ENCODE measurements at regions of chrX and their contacts with region 1.

Region 1: GRCh38 chrX:123960042-123960611 is 1.4 kb upstream of the STAG2 start:
- DNase-seq: peak; percentile 74
- ATAC-seq: peak; percentile 74
- H3K4me3 Mint-ChIP-seq: peak overlapping the region; percentile 93
- H3K27ac Mint-ChIP-seq: peak overlapping the region; percentile 99
- H3K4me1 Mint-ChIP-seq: peaks cover 23% of the 10 kb centered on the region
- H3K27me3 Mint-ChIP-seq: no peaks in the 10 kb centered on the region
- CTCF ChIP-seq: no peak

Region 2: GRCh38 chrX:123833387-123833786 is 126.7 kb before region 1 on chrX:
- CTCF ChIA-PET with region 1: interaction called, 7 read pairs
- POLR2A ChIA-PET with region 1: interaction called, 10 read pairs
- intact Hi-C with region 1: loop called (anchors 1 kb)
- DNase-seq: peak; percentile 16
- ATAC-seq: peak; percentile 63
- H3K4me3 Mint-ChIP-seq: no peak overlapping the region
- H3K27ac Mint-ChIP-seq: no peak overlapping the region
- H3K4me1 Mint-ChIP-seq: peaks cover 20% of the 10 kb centered on the region
- H3K27me3 Mint-ChIP-seq: no peaks in the 10 kb centered on the region
- CTCF ChIP-seq: no peak

Region 3: GRCh38 chrX:123878252-123878721 is 81.8 kb before region 1 on chrX:
- CTCF ChIA-PET with region 1: no interaction called
- POLR2A ChIA-PET with region 1: no interaction called
- intact Hi-C with region 1: loop called (anchors 5 kb)
- DNase-seq: no peak
- ATAC-seq: peak; percentile 73
- H3K4me3 Mint-ChIP-seq: peak overlapping the region; percentile 38
- H3K27ac Mint-ChIP-seq: peak overlapping the region; percentile 41
- H3K4me1 Mint-ChIP-seq: peaks cover 26% of the 10 kb centered on the region
- H3K27me3 Mint-ChIP-seq: no peaks in the 10 kb centered on the region
- CTCF ChIP-seq: no peak

Region 4: GRCh38 chrX:123909523-123909922 is 50.6 kb before region 1 on chrX:
- CTCF ChIA-PET with region 1: no interaction called
- POLR2A ChIA-PET with region 1: no interaction called
- intact Hi-C with region 1: no loop called
- DNase-seq: no peak
- ATAC-seq: no peak
- H3K4me3 Mint-ChIP-seq: no peak overlapping the region
- H3K27ac Mint-ChIP-seq: no peak overlapping the region
- H3K4me1 Mint-ChIP-seq: peaks cover 28% of the 10 kb centered on the region
- H3K27me3 Mint-ChIP-seq: no peaks in the 10 kb centered on the region
- CTCF ChIP-seq: no peak

Region 5: GRCh38 chrX:124018023-124018422 is 57.9 kb after region 1 on chrX:
- CTCF ChIA-PET with region 1: no interaction called
- POLR2A ChIA-PET with region 1: interaction called, 4 read pairs
- intact Hi-C with region 1: loop called (anchors 1 kb)
- DNase-seq: no peak
- ATAC-seq: no peak
- H3K4me3 Mint-ChIP-seq: no peak overlapping the region
- H3K27ac Mint-ChIP-seq: no peak overlapping the region
- H3K4me1 Mint-ChIP-seq: peaks cover 32% of the 10 kb centered on the region
- H3K27me3 Mint-ChIP-seq: no peaks in the 10 kb centered on the region
- CTCF ChIP-seq: no peak

Region 6: GRCh38 chrX:124211312-124211942 is 251.3 kb after region 1 on chrX:
- CTCF ChIA-PET with region 1: no interaction called
- POLR2A ChIA-PET with region 1: no interaction called
- intact Hi-C with region 1: loop called (anchors 10 kb)
- DNase-seq: no peak
- ATAC-seq: no peak
- H3K4me3 Mint-ChIP-seq: no peak overlapping the region
- H3K27ac Mint-ChIP-seq: no peak overlapping the region
- H3K4me1 Mint-ChIP-seq: peaks cover 15% of the 10 kb centered on the region
- H3K27me3 Mint-ChIP-seq: peaks cover 1% of the 10 kb centered on the region
- CTCF ChIP-seq: no peak

Region 7: GRCh38 chrX:124362072-124362471 is 401.9 kb after region 1 on chrX:
- CTCF ChIA-PET with region 1: no interaction called
- POLR2A ChIA-PET with region 1: no interaction called
- intact Hi-C with region 1: no loop called
- DNase-seq: no peak
- ATAC-seq: no peak
- H3K4me3 Mint-ChIP-seq: no peak overlapping the region
- H3K27ac Mint-ChIP-seq: no peak overlapping the region
- H3K4me1 Mint-ChIP-seq: no peaks in the 10 kb centered on the region
- H3K27me3 Mint-ChIP-seq: peaks cover under 1% of the 10 kb centered on the region
- CTCF ChIP-seq: no peak

Region 8: GRCh38 chrX:124717537-124717936 is 757.4 kb after region 1 on chrX:
- CTCF ChIA-PET with region 1: no interaction called
- POLR2A ChIA-PET with region 1: no interaction called
- intact Hi-C with region 1: no loop called
- DNase-seq: no peak
- ATAC-seq: no peak
- H3K4me3 Mint-ChIP-seq: no peak overlapping the region
- H3K27ac Mint-ChIP-seq: no peak overlapping the region
- H3K4me1 Mint-ChIP-seq: no peaks in the 10 kb centered on the region
- H3K27me3 Mint-ChIP-seq: no peaks in the 10 kb centered on the region
- CTCF ChIP-seq: no peak